ENCODE measurements at regions of chr4 and their contacts with region 1.

Region 1: DNA sequence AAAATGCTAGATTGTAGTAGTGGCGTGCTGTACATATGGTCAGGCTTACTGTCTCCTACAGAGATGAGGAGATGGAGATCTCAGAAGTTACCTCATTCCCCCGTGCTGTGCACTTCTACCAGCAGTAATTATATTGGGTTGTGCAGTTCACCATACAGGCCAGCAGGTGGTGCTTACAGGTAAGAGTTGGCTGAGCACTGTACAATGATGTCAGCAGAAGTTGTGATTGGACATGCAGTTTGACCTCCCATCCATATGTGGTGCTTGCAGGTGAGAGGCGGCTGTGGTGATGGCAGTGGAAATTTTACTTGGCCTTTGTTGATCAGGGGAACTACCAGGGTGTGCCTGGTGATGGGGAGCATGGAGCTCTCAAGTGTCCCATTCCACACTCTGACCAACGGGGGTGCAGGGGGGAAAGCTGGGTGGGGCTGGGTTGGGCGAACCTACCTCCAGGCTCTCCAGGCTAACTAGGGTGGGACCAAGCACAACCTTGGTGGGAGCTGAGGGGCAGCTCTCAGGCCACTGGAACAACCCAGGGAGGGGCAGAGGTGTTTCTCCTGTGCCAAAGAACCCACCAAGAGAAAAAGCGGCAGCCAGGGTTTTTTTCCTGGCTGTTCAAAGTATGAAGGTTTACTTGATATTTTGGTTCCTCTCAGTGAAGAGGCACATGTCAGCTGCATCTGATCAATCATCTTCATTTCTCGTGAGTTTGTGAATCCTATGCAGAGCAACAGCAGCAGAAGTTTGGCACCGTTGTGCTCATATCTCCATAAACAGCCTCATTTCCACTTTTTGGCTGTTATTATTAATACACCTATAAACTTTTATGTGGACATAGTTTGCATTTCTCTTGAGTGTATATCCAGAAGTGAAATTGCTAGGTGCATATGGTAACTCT is 73.8 kb upstream of the FREM3 start:
- DNase-seq: peak; percentile 29
- ATAC-seq: peak; percentile 99
- H3K4me3 Mint-ChIP-seq: peak overlapping the region; percentile 42
- H3K27ac Mint-ChIP-seq: no peak overlapping the region
- H3K4me1 Mint-ChIP-seq: peaks cover 8% of the 10 kb centered on the region
- H3K27me3 Mint-ChIP-seq: peaks cover 8% of the 10 kb centered on the region
- CTCF ChIP-seq: peak; percentile 40

Region 2: DNA sequence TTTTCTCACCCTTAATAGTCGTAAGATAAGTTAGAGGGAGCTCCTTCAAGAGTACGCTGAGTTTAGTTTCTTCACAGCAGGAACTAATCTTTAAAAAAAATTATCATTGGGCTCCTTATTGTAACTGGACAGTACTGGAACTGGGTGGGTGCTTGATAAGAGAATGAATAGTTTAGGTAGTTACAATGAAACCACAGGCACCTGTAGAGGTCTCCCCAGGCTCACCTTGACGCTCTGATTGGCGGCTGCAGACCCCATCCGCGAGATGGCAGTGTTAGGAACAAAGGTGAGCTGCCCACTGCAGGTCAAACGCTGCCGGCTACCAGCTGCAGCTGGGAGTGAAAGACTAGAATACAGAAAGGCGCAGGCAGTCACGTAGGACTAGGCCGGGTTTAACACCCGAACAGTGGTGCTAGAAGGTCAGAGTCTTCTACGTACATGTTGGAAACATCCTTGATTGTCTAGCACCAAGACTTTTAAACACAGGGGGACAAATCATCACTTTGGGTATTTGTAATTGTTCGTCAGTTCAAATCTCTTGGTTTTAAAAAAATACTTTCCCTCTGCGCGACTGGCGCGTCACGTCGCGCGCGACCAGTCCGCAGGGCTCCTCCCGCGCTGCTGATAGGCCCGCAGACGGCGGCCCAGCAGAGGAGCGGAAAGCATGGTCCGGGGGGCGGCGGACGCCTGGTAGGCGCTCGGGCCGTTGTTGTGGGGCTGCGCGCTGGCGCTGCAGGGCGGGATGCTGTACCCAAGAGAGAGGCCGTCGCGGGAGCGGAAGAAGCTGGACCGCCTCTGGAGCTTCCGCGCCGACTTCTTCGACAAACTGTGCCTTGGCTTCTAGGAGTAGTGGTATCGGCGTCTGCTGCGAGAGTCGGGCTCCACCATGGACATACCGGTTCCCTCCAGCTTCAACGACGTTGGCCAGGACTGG is 215.2 kb before region 1 on chr4:
- CTCF ChIA-PET with region 1: no interaction called
- POLR2A ChIA-PET with region 1: no interaction called
- intact Hi-C with region 1: loop called (anchors 5 kb)
- DNase-seq: peak; percentile 52
- ATAC-seq: peak; percentile 88
- H3K4me3 Mint-ChIP-seq: peak overlapping the region; percentile 94
- H3K27ac Mint-ChIP-seq: peak overlapping the region; percentile 92
- H3K4me1 Mint-ChIP-seq: peaks cover 28% of the 10 kb centered on the region
- H3K27me3 Mint-ChIP-seq: no peaks in the 10 kb centered on the region
- CTCF ChIP-seq: no peak

Region 3: GRCh38 chr4:143882892-143883291 is 108.6 kb after region 1 on chr4:
- CTCF ChIA-PET with region 1: no interaction called
- POLR2A ChIA-PET with region 1: no interaction called
- intact Hi-C with region 1: no loop called
- DNase-seq: no peak
- ATAC-seq: no peak
- H3K4me3 Mint-ChIP-seq: no peak overlapping the region
- H3K27ac Mint-ChIP-seq: no peak overlapping the region
- H3K4me1 Mint-ChIP-seq: no peaks in the 10 kb centered on the region
- H3K27me3 Mint-ChIP-seq: no peaks in the 10 kb centered on the region
- CTCF ChIP-seq: no peak

Region 4: DNA sequence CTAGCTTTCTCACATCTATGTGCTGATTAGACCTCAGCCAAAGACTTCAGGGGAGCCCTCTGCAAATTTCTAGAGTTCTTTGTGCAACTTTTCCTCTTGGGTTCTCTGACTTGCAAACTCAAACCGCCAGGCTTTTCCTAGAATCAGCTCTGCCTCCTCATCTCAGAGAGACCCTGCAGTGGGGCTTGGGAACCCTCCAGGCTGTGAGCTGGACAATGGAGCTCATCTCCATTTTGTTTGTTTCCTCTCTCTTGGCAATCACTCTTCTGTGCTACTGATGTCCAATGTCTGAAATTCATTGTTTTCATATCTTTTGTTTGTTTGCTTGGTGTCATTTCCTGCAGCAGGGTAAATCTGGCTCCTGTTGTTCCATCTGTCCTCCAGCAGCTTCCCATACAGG is 211.9 kb after region 1 on chr4:
- CTCF ChIA-PET with region 1: interaction called, 13 read pairs
- POLR2A ChIA-PET with region 1: no interaction called
- intact Hi-C with region 1: no loop called
- DNase-seq: no peak
- ATAC-seq: no peak
- H3K4me3 Mint-ChIP-seq: no peak overlapping the region
- H3K27ac Mint-ChIP-seq: no peak overlapping the region
- H3K4me1 Mint-ChIP-seq: no peaks in the 10 kb centered on the region
- H3K27me3 Mint-ChIP-seq: no peaks in the 10 kb centered on the region
- CTCF ChIP-seq: no peak

Region 5: DNA sequence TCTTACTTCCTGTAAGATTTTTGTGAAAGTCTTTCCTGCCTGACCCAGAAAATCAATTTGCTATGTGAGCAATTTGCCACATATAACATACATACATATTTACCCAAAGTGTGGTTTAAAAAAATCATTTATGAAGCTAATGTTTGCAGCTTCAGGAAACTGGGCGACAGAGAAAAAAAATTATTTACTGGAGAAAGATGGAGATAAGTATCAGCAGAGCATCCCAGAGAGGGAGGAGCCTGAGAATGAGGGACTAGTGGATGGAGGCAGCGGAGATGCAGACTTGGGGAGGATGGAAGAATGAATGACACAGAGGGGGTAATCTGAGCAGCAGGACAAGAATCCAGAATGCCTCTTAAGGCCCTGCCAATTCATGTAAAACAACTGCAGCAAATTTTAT is 367.2 kb after region 1 on chr4:
- CTCF ChIA-PET with region 1: no interaction called
- POLR2A ChIA-PET with region 1: no interaction called
- intact Hi-C with region 1: loop called (anchors 1 kb)
- DNase-seq: no peak
- ATAC-seq: no peak
- H3K4me3 Mint-ChIP-seq: no peak overlapping the region
- H3K27ac Mint-ChIP-seq: no peak overlapping the region
- H3K4me1 Mint-ChIP-seq: no peaks in the 10 kb centered on the region
- H3K27me3 Mint-ChIP-seq: peaks cover 7% of the 10 kb centered on the region
- CTCF ChIP-seq: no peak